ENCODE measurements at regions of chr12 and their contacts with region 1.

Region 1: DNA sequence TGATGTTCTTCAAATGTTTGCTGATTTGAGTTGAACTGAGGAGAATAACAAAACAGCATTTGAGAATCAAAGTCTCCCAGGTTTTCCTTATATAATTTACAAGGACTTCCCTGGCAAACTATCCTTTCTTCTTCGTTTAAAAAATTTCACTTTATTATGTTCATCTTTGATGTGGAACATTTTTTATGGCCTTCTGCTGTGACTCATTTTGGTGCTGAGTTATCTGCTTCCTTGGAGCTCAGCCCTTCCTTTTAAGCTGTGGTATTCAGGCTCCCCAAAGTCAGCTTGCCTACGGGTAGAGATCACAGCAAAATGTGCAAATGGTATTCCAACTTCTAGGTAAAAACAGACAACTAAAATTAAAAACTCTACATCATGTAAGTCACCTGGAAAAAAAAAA is 1.4 kb upstream of the ANO4 start:
- DNase-seq: no peak
- ATAC-seq: no peak
- H3K4me3 ChIP-seq: no peak overlapping the region
- H3K4me3 Mint-ChIP-seq: no peak overlapping the region
- H3K27ac ChIP-seq: no peak overlapping the region
- H3K27ac Mint-ChIP-seq: no peak overlapping the region
- H3K4me1 ChIP-seq: no peaks in the 10 kb centered on the region
- H3K4me1 Mint-ChIP-seq: no peaks in the 10 kb centered on the region
- H3K27me3 ChIP-seq: peaks cover 0 to 6% of the 10 kb centered on the region in 2 experiments
- H3K27me3 Mint-ChIP-seq: peaks cover 7 to 27% of the 10 kb centered on the region in 2 donors

Region 2: GRCh38 chr12:101485021-101485420 is 691.8 kb after region 1 on chr12:
- CTCF ChIA-PET with region 1: interaction called in 1 of 2 experiments, 11 read pairs
- POLR2A ChIA-PET with region 1: no interaction called
- DNase-seq: no peak
- ATAC-seq: no peak
- H3K4me3 ChIP-seq: no peak overlapping the region
- H3K4me3 Mint-ChIP-seq: no peak overlapping the region
- H3K27ac ChIP-seq: no peak overlapping the region
- H3K27ac Mint-ChIP-seq: no peak overlapping the region
- H3K4me1 ChIP-seq: no peaks in the 10 kb centered on the region
- H3K4me1 Mint-ChIP-seq: no peaks in the 10 kb centered on the region
- H3K27me3 ChIP-seq: no peaks in the 10 kb centered on the region
- H3K27me3 Mint-ChIP-seq: peaks cover 8 to 13% of the 10 kb centered on the region in 2 donors

Region 3: DNA sequence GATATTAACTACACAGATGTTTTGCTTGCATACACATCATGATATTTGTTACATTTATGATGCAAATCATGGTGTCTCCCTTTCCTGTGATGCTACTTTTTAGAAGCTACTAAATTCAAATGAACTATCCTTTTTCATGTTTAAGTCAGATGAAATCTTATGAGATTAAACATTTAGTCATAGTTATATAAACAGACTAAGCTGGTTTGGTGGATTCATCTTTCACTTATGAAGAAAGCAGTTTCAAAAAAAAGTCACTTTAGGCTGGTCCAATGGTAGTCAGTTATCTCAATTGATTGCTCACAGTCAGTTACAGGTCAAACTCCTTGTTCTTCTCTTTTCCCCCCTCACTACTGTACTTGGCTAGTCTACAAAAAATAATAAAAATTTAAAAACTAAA is 926.4 kb after region 1 on chr12:
- CTCF ChIA-PET with region 1: no interaction called
- POLR2A ChIA-PET with region 1: no interaction called
- DNase-seq: no peak
- ATAC-seq: no peak
- H3K4me3 ChIP-seq: no peak overlapping the region
- H3K4me3 Mint-ChIP-seq: no peak overlapping the region
- H3K27ac ChIP-seq: no peak overlapping the region
- H3K27ac Mint-ChIP-seq: no peak overlapping the region
- H3K4me1 ChIP-seq: no peaks in the 10 kb centered on the region
- H3K4me1 Mint-ChIP-seq: no peaks in the 10 kb centered on the region
- H3K27me3 ChIP-seq: no peaks in the 10 kb centered on the region
- H3K27me3 Mint-ChIP-seq: no peaks in the 10 kb centered on the region